MCF 10A (cell line): ENCODE measurements at regions of chr1 and their contacts with region 1.

Region 1: DNA sequence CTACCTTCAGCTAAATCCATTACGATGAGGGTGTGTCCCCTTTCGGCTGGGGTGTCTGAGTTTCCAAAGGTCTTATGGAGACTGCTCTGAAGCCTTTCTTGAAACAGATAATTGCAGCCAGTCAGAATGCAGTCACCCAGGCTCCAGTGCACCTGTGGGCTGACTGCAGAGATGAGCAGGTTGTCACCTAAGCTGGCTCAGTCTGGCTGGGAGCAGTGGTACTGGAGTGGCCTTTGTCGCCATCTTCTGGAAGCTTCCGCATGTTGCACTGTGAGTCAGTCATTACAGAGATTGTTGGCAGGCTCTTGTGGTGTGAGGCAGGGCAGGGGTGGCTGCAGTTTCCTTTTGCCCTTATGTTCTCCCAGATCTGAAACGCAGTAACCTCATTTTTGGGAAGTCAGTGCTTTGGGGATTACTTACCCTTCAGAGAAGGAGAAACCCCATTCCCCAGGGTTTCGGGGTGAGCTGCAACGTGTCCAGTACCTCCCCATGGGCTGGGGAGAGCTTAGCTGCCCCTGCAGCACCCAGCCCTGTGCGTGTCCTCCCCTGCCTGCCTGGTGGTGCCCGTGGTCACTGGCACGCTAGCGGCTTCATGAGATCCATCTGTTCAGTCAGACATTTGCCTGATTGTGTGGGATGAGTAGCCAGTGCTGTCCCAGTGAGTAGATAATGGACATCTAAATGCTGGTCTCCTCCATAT is 48.0 kb downstream of the SMYD2 start:
- DNase-seq: peak; percentile 95
- H3K4me3 Mint-ChIP-seq: no peak overlapping the region
- H3K27ac Mint-ChIP-seq: no peak overlapping the region
- H3K4me1 Mint-ChIP-seq: no peaks in the 10 kb centered on the region
- H3K27me3 Mint-ChIP-seq: no peaks in the 10 kb centered on the region
- CTCF ChIP-seq: peak; percentile 100

Region 2: DNA sequence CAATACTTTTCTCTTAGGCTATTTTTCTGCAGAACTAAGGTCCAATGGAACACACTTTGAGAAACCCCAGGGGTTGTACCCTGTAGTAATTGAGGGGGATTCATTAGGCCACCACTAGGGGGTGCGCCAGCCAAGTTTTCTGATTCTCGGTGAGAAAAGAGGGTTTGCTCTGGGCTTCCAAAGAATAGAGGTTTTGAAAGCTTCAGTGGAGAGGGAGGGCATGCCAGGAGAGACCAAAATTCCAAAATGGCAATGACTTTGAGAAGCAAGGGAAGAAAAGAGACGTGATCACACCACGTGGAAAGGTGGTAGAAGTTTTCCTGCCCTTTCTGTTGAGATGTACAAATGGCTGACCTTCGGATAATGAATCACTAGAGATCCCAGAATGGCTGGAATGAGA is 954.6 kb before region 1 on chr1:
- CTCF ChIA-PET with region 1: interaction called, 6 read pairs
- POLR2A ChIA-PET with region 1: no interaction called
- intact Hi-C with region 1: loop called (anchors 1 kb)
- DNase-seq: peak; percentile 90
- H3K4me3 Mint-ChIP-seq: no peak overlapping the region
- H3K27ac Mint-ChIP-seq: no peak overlapping the region
- H3K4me1 Mint-ChIP-seq: peaks cover 4% of the 10 kb centered on the region
- H3K27me3 Mint-ChIP-seq: no peaks in the 10 kb centered on the region
- CTCF ChIP-seq: peak; percentile 99

Region 3: GRCh38 chr1:214248311-214249085 is 80.4 kb before region 1 on chr1:
- CTCF ChIA-PET with region 1: interaction called, 37 read pairs
- POLR2A ChIA-PET with region 1: no interaction called
- intact Hi-C with region 1: no loop called
- DNase-seq: no peak
- H3K4me3 Mint-ChIP-seq: no peak overlapping the region
- H3K27ac Mint-ChIP-seq: no peak overlapping the region
- H3K4me1 Mint-ChIP-seq: peaks cover 6% of the 10 kb centered on the region
- H3K27me3 Mint-ChIP-seq: peaks cover 48% of the 10 kb centered on the region
- CTCF ChIP-seq: no peak

Region 4: DNA sequence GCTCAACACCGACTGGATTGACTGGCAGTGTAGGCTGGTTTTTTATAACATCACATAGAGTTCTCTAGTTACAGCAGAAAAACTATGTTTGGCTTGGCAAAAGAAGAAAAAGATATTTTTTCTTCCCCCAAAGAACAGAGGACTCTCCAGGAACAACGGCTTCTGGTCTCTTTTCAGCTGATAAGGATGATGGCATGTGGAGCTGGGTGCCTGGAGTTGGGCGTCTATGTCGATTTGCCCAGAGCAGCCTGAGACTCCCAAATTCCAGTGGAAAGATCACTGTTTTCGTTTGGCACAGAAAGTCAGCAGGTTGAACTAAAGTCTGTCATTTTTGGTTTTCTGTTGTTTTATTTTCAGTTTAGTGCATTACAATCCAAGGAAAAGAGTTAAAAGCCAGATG is 43.2 kb after region 1 on chr1:
- CTCF ChIA-PET with region 1: interaction called, 33 read pairs
- POLR2A ChIA-PET with region 1: no interaction called
- intact Hi-C with region 1: no loop called
- DNase-seq: no peak
- H3K4me3 Mint-ChIP-seq: no peak overlapping the region
- H3K27ac Mint-ChIP-seq: peak overlapping the region; percentile 11
- H3K4me1 Mint-ChIP-seq: peaks cover 6% of the 10 kb centered on the region
- H3K27me3 Mint-ChIP-seq: no peaks in the 10 kb centered on the region
- CTCF ChIP-seq: no peak

Region 5: GRCh38 chr1:214454619-214455396 is 125.9 kb after region 1 on chr1:
- CTCF ChIA-PET with region 1: interaction called, 29 read pairs
- POLR2A ChIA-PET with region 1: interaction called, 4 read pairs
- intact Hi-C with region 1: no loop called
- DNase-seq: peak; percentile 60
- H3K4me3 Mint-ChIP-seq: no peak overlapping the region
- H3K27ac Mint-ChIP-seq: peak overlapping the region; percentile 42
- H3K4me1 Mint-ChIP-seq: peaks cover 66% of the 10 kb centered on the region
- H3K27me3 Mint-ChIP-seq: no peaks in the 10 kb centered on the region
- CTCF ChIP-seq: no peak

Region 6: DNA sequence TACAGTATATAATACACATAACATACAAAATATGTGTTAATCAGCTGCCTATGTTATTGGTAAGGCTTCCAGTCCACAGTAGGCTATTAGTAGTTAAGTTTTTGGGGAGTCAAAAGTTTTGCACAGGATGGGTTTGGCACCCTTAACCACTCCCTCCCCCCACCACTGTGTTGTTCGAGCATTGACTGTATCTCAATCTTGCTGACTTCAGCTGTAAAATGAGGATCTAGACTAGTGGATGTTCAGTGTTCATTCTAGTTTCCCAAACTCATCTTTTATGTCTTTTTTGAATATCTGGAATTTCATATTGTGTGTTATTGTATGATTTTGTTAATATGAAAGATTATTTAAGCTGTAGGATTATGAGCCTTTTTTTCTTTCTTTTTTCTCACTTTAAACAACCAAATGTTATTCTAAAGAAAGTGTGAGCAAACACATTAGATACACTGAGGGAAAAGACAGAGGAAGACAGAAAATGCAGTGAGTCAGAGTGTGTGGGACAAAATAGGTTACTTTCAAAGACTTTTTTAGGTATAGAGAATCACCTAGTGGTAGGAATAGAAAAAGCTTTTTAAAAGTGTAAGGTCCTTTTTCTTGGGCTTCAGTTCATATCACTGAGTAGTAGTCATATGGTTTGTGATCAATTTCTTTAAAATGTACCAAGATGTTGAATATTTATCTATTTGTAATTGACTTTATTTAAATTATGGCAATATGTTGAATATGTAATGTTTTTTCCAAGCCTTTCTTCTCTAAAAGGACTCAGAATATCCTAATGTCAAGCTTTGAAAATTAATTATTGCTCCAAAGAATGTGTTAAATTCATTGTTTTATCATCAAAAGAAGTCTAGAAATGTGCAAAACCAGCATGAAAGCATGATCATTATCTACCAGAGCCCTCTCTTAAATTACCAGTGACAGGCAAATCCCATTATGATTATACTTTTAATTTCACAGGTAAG is 256.2 kb after region 1 on chr1:
- CTCF ChIA-PET with region 1: interaction called, 958 read pairs
- POLR2A ChIA-PET with region 1: interaction called, 53 read pairs
- intact Hi-C with region 1: loop called (anchors 1 kb)
- DNase-seq: peak; percentile 85
- H3K4me3 Mint-ChIP-seq: no peak overlapping the region
- H3K27ac Mint-ChIP-seq: peak overlapping the region; percentile 49
- H3K4me1 Mint-ChIP-seq: peaks cover 38% of the 10 kb centered on the region
- H3K27me3 Mint-ChIP-seq: no peaks in the 10 kb centered on the region
- CTCF ChIP-seq: peak; percentile 98

Region 7: GRCh38 chr1:215146341-215146826 is 817.5 kb after region 1 on chr1:
- CTCF ChIA-PET with region 1: interaction called, 3 read pairs
- POLR2A ChIA-PET with region 1: no interaction called
- intact Hi-C with region 1: loop called (anchors 5 kb)
- DNase-seq: peak; percentile 77
- H3K4me3 Mint-ChIP-seq: no peak overlapping the region
- H3K27ac Mint-ChIP-seq: no peak overlapping the region
- H3K4me1 Mint-ChIP-seq: no peaks in the 10 kb centered on the region
- H3K27me3 Mint-ChIP-seq: no peaks in the 10 kb centered on the region
- CTCF ChIP-seq: peak; percentile 98